SK-N-SH (cell line): ENCODE measurements at regions of chr9 and their contacts with region 1.

Region 1: DNA sequence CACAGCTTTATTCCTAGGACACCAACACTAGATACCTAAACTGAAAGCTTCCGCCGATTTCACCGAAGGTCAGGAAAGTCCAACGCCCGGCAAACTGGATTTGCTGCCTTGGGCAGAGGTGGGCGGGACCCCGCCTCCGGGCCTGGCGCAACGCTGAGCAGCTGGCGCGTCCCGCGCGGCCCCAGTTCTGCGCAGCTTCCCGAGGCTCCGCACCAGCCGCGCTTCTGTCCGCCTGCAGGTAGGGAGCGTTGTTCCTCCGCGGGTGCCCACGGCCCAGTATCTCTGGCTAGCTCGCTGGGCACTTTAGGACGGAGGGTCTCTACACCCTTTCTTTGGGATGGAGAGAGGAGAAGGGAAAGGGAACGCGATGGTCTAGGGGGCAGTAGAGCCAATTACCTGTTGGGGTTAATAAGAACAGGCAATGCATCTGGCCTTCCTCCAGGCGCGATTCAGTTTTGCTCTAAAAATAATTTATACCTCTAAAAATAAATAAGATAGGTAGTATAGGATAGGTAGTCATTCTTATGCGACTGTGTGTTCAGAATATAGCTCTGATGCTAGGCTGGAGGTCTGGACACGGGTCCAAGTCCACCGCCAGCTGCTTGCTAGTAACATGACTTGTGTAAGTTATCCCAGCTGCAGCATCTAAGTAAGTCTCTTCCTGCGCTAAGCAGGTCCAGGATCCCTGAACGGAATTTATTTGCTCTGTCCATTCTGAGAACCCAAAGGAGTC is at the start of gene CD274:
- DNase-seq: peak; percentile 82
- H3K4me3 ChIP-seq: peak within 1 kb of the TSS; percentile 64 to 67
- H3K27ac ChIP-seq: peak within 1 kb of the TSS; percentile 67 to 75
- H3K4me1 ChIP-seq: peaks cover 6 to 21% of the 10 kb centered on the region in 2 experiments
- H3K27me3 ChIP-seq: no peaks in the 10 kb centered on the region
- CTCF ChIP-seq: peak; percentile 67
- EP300 ChIP-seq: no peak
- RAD21 ChIP-seq: peak; percentile 76
- polyA plus RNA-seq, gene CD274: 25.8 and 30.9 TPM in 2 replicates

Region 2: DNA sequence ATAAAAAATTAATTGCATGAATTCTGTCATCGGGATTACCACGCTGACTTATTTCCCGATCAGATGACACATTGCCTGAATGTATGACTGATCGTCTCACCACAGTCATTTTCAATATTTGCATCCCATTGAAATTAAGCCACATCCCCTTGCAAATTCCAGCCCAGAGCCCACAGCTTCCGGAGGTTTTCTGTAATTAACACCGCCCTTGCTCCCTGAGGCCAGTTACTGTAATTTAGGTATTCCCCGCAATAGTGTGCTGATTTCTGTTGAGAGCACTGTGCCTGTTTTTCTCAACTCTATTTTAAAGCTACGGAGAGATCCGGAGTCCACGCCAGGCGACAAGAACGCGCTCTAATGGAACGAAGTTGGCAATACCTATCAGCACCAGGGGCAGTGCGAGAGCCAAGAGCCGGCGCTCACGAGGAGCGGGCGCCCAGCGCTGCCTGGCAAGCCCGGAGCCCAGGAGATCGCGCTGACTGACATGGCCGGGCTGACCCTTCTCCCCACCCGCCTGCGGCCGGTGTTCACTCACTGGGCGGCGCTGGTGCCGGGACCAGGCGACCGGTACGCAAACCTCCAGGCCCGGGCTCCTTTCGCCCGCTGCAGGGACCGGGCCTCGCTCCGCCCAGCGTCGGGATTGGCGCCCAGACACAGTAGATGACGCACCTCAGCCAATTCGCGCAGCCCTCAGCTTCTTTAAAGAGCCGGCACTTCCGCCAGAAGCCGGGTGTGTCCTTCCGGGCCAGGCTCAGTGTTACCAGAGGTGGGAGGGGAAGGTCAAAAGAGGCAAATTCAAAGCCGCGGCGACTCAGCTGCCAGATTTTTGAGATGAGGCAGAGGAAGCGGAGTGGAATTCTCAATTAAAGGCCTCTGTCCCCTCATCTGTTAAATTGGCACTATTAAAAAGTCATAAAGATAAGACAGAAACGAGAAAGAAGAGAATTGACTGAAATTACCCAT is 13.0 kb before region 1 on chr9 and contains the start of gene PLGRKT:
- CTCF ChIA-PET with region 1: interaction called, 13 read pairs
- POLR2A ChIA-PET with region 1: interaction called, 3 read pairs
- DNase-seq: peak; percentile 92
- H3K4me3 ChIP-seq: peak within 1 kb of the TSS; percentile 85 to 86
- H3K27ac ChIP-seq: peak within 1 kb of the TSS; percentile 90 to 96
- H3K4me1 ChIP-seq: peaks cover 6 to 15% of the 10 kb centered on the region in 2 experiments
- H3K27me3 ChIP-seq: no peaks in the 10 kb centered on the region
- CTCF ChIP-seq: peak; percentile 36
- EP300 ChIP-seq: 0 out of 4 replicates have a peak, but pooled peaks of 1 of the 2 experiments have one; percentile 23
- RAD21 ChIP-seq: no peak
- polyA plus RNA-seq, gene PLGRKT: 11.4 and 13.1 TPM in 2 replicates

Region 3: GRCh38 chr9:5478206-5478605 is 27.7 kb after region 1 on chr9:
- CTCF ChIA-PET with region 1: no interaction called
- POLR2A ChIA-PET with region 1: no interaction called
- DNase-seq: no peak
- H3K4me3 ChIP-seq: no peak overlapping the region
- H3K27ac ChIP-seq: no peak overlapping the region
- H3K4me1 ChIP-seq: no peaks in the 10 kb centered on the region
- H3K27me3 ChIP-seq: no peaks in the 10 kb centered on the region
- CTCF ChIP-seq: no peak
- EP300 ChIP-seq: no peak
- RAD21 ChIP-seq: no peak

Region 4: DNA sequence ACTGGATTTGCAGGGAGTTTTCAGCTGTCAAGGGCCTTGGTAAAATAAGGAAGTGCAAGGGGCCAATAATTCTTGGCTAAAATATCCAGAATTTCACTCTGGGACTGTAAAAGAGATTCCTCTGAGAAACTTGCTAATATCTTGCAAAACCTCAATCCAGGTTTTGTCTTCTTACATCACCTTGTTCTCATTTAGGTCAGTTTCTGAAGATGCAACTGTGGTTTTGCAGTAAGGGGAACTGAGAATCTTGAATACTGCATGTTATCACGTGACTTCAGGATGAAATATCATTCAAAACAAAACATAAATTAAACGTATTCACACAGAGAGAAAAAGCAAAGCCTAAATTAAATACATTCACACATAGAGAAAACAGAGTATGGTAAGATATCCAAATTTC is 143.4 kb after region 1 on chr9:
- CTCF ChIA-PET with region 1: interaction called, 51 read pairs
- POLR2A ChIA-PET with region 1: no interaction called
- DNase-seq: no peak
- H3K4me3 ChIP-seq: no peak overlapping the region
- H3K27ac ChIP-seq: no peak overlapping the region
- H3K4me1 ChIP-seq: no peaks in the 10 kb centered on the region; a peak in 1 of 4 replicates
- H3K27me3 ChIP-seq: no peaks in the 10 kb centered on the region
- CTCF ChIP-seq: no peak
- EP300 ChIP-seq: no peak
- RAD21 ChIP-seq: no peak